Activated CD4-positive, alpha-beta T cell treated with anti-CD3 and anti-CD28 coated beads, Interleukin-2, amount 10 ng/mL, durations not matched to agents 24 days and 14 days (primary cell): ENCODE measurements at regions of chr21 and their contacts with region 1.

Region 1: GRCh38 chr21:35095859-35096291 is 46.8 kb upstream of the RUNX1 start:
- DNase-seq: no peak
- H3K4me3 Mint-ChIP-seq: no peak overlapping the region
- H3K27ac Mint-ChIP-seq: peak overlapping the region; percentile 92
- H3K4me1 Mint-ChIP-seq: peaks cover 29% of the 10 kb centered on the region
- H3K27me3 Mint-ChIP-seq: no peaks in the 10 kb centered on the region

Region 2: GRCh38 chr21:34807146-34807880 is 288.6 kb before region 1 on chr21:
- intact Hi-C with region 1: loop called (anchors 5 kb)
- DNase-seq: peak; percentile 84
- H3K4me3 Mint-ChIP-seq: peak overlapping the region; percentile 57
- H3K27ac Mint-ChIP-seq: peak overlapping the region; percentile 94
- H3K4me1 Mint-ChIP-seq: peaks cover 66% of the 10 kb centered on the region
- H3K27me3 Mint-ChIP-seq: no peaks in the 10 kb centered on the region

Region 3: GRCh38 chr21:35150562-35151226 is 54.8 kb after region 1 on chr21:
- intact Hi-C with region 1: loop called (anchors 1 kb)
- DNase-seq: no peak
- H3K4me3 Mint-ChIP-seq: peak overlapping the region; percentile 48
- H3K27ac Mint-ChIP-seq: peak overlapping the region; percentile 92
- H3K4me1 Mint-ChIP-seq: peaks cover 33% of the 10 kb centered on the region
- H3K27me3 Mint-ChIP-seq: no peaks in the 10 kb centered on the region

Region 4: DNA sequence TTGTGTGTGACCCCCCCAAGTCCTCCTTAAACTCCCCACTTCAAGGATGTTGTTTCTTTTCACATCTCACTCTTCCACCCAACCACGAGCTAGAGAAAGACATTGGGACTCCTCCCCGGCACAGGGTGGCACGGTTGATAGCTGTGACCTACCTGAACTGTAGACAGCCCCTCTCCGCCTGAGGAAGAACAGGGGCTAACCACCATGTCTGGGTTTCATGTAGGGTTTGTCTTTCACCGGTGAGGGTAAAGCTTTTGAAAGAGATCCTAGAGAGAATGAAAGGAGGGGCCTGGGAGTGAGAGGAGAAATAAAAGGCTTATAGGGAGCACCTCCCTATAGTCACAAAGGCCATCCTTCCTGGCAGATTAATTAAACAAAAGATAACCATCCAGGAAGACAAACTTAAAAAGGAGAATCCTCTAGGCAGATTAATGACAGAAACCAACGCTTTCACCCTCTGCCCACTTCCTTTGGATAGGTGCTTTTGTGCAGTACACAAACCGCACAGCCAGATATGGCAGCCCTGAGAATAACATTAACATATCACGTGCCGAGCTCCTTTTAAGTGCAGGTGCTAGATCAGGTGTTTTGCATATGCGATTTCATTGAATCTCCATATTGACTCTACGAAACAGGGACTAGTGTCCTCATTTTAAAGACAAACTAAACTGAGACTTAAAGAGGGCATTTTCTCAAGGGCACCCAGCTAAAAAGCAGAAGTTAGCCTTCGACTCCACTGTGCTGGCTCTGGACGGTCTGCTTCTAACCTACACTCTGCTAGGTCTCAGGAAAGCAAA is 131.3 kb after region 1 on chr21:
- intact Hi-C with region 1: loop called (anchors 2 kb)
- DNase-seq: peak; percentile 85
- H3K4me3 Mint-ChIP-seq: peak overlapping the region; percentile 46
- H3K27ac Mint-ChIP-seq: peak overlapping the region; percentile 70
- H3K4me1 Mint-ChIP-seq: peaks cover 30% of the 10 kb centered on the region
- H3K27me3 Mint-ChIP-seq: no peaks in the 10 kb centered on the region

Region 5: GRCh38 chr21:35528116-35529042 is 432.5 kb after region 1 on chr21:
- intact Hi-C with region 1: loop called (anchors 2 kb)
- DNase-seq: peak; percentile 82
- H3K4me3 Mint-ChIP-seq: peak overlapping the region; percentile 86
- H3K27ac Mint-ChIP-seq: peak overlapping the region; percentile 94
- H3K4me1 Mint-ChIP-seq: peaks cover 49% of the 10 kb centered on the region
- H3K27me3 Mint-ChIP-seq: no peaks in the 10 kb centered on the region